Activated naive CD4-positive, alpha-beta T cell treated with anti-CD3 and anti-CD28 coated beads, Interleukin-2, amount 10 ng/mL, durations not matched to agents 7 days and 5 days (primary cell): ENCODE measurements at regions of chr6 and their contacts with region 1.

Region 1: DNA sequence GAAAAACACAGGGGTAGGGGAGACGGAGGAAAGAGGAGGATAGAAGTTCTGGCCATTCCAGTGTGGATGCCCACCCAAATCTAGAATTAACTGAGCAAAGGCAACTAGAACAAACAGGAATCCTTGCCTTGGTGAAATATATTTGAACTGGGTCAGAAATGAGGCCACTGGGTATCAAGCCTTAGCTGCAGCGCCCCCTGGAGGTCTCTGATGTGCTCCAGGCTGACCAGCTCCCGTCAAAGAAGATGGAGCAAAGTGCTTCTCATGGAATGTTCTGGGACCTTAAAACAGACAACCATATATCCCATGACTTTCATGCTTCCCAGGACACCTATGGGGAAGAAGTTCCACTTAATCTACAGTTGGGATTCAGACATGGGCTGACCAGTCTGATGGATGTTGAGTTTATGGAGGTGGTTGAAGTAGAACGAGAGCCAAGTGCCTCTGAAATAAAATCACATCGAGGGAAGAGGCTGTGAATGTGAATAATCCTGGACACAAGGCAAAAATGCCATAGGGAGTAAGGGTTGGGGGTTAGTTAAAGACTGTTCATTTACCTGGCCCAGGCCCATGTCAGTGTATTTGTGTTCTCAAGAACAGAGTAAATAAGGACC is 50.4 kb downstream of the HLA-DPB1 start:
- DNase-seq: peak; percentile 80
- H3K4me3 Mint-ChIP-seq: no peak overlapping the region
- H3K27ac Mint-ChIP-seq: no peak overlapping the region
- H3K4me1 Mint-ChIP-seq: peaks cover 5% of the 10 kb centered on the region
- H3K27me3 Mint-ChIP-seq: peaks cover 50% of the 10 kb centered on the region

Region 2: GRCh38 chr6:32772656-32773055 is 353.6 kb before region 1 on chr6:
- CTCF ChIA-PET with region 1: no interaction called
- DNase-seq: no peak
- H3K4me3 Mint-ChIP-seq: no peak overlapping the region
- H3K27ac Mint-ChIP-seq: no peak overlapping the region
- H3K4me1 Mint-ChIP-seq: peaks cover 2% of the 10 kb centered on the region
- H3K27me3 Mint-ChIP-seq: peaks cover 30% of the 10 kb centered on the region

Region 3: DNA sequence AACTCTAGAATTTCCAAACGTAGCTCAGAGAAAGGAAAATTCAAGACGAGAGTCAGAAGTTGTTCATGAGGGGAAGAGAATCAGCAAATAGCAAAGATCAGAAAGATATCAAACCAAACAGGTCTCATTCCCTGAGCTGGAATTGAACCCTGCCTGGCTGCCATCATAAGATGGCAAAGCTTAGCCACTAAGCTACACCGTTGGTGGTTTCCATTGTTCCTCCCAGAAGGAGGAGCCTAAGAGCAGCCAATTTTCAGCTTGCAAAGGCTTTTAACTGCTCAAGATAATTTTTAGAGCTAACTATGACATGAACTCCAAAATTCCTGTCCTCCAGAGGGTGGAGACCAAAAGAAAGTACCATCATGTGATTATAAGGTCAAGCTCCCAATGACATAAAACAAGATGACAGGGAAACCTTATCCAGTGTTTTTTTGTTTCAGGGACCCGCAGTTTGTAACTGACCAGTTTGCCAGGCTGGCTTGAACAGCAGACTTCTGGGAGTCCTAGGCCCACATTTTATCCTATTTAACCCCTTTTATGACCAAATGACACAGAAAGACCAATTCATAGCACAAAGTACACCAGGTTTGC is 10.2 kb after region 1 on chr6:
- CTCF ChIA-PET with region 1: interaction called, 21 read pairs
- DNase-seq: no peak
- H3K4me3 Mint-ChIP-seq: no peak overlapping the region
- H3K27ac Mint-ChIP-seq: no peak overlapping the region
- H3K4me1 Mint-ChIP-seq: no peaks in the 10 kb centered on the region
- H3K27me3 Mint-ChIP-seq: peaks cover 38% of the 10 kb centered on the region

Region 4: DNA sequence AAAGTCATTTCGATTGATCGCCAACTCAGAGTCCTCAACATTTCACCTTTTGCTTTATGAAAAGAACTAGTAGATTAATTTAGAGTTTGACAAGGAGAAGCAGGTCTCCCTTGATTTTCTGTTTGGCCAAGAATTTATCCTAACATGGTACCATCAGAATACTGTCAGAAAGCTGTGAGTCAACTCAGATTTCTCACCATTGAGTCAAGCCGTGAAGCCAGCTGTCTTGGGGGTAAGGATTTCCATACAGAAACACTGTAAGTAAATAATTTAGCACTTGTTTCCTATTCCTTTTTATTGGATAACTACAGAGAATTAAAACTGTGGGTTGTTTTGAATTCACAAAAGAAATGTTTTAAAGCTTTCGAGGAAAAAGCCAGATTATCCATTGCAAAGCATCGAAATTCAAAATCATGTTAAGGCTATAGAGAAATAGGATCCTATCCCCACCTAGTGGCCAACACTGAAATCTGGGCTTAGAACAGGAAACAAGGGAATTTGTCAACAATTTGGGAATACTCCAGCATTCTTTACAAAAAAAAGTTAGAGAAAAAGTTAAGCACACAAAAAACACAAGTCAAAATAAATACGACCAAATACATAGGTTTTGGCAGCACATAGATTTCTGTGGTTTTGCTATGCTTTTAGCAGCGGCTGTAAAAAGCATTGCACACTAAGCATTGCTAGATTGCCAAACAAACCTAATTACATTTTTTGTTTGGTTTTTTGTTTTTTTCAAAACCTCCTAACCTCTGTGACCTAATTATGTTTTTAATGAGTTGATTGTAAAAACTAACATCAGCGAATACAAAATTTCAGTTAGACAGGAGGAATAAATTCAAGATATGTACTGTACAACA is 21.8 kb after region 1 on chr6:
- CTCF ChIA-PET with region 1: interaction called, 78 read pairs
- DNase-seq: no peak
- H3K4me3 Mint-ChIP-seq: no peak overlapping the region
- H3K27ac Mint-ChIP-seq: no peak overlapping the region
- H3K4me1 Mint-ChIP-seq: no peaks in the 10 kb centered on the region
- H3K27me3 Mint-ChIP-seq: peaks cover 39% of the 10 kb centered on the region

Region 5: GRCh38 chr6:33156561-33156960 is 30.4 kb after region 1 on chr6:
- CTCF ChIA-PET with region 1: interaction called, 40 read pairs
- DNase-seq: no peak
- H3K4me3 Mint-ChIP-seq: no peak overlapping the region
- H3K27ac Mint-ChIP-seq: no peak overlapping the region
- H3K4me1 Mint-ChIP-seq: peaks cover 12% of the 10 kb centered on the region
- H3K27me3 Mint-ChIP-seq: peaks cover 54% of the 10 kb centered on the region

Region 6: DNA sequence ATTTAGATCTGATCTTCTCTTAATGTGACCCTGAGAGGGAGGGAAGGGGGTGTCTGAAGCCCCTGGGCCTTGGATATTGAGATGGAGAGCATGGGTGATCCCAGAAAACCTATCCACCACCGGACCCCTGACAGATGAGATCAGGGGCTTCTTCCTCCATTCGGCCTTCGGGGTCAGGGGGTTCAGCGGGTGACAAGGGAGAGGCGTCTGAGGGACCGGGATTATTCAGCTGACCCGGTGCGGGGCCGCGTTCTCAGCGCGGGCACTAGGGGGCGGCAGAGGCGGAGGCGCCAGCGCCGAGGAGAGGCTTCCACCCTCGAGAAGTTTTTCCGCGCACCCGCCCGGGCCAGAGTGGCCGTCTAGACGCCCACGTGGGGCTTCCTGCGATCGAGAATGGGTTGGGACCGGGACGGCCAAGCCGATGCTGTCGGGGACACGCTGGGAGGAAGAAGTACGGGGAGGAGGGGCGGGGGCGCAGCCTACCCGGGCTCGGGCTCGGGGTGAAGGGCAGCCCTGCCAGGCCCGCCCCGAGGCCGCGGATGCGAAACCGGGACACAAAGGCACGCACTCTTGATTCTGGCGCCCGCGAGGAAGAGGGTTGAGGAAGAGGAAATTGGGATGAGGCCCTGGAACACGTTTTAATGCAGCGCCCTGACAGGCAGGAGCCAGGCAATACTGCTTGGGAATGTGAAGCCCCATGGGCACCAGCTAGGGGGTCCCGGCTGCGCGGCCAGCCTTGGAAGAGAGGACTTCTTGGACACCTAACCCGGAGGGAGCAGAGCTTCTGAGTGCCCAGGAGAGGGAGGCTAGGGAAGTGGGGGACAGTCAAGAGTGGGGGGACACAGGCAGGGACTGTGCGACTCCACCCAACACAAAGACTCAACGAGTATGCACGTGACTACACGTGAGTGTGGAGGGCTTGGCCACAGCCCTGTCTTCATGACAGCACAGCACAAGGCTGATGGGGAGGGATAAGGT is 35.4 kb after region 1 on chr6:
- CTCF ChIA-PET with region 1: interaction called, 40 read pairs
- DNase-seq: peak; percentile 87
- H3K4me3 Mint-ChIP-seq: peak overlapping the region; percentile 77
- H3K27ac Mint-ChIP-seq: peak overlapping the region; percentile 49
- H3K4me1 Mint-ChIP-seq: peaks cover 18% of the 10 kb centered on the region
- H3K27me3 Mint-ChIP-seq: peaks cover 48% of the 10 kb centered on the region

Region 7: GRCh38 chr6:33197431-33198048 is 71.3 kb after region 1 on chr6:
- CTCF ChIA-PET with region 1: interaction called, 27 read pairs
- DNase-seq: peak; percentile 49
- H3K4me3 Mint-ChIP-seq: peak overlapping the region; percentile 98
- H3K27ac Mint-ChIP-seq: peak overlapping the region; percentile 56
- H3K4me1 Mint-ChIP-seq: peaks cover 54% of the 10 kb centered on the region
- H3K27me3 Mint-ChIP-seq: peaks cover 13% of the 10 kb centered on the region

Region 8: GRCh38 chr6:33248925-33249731 is 122.9 kb after region 1 on chr6:
- CTCF ChIA-PET with region 1: interaction called, 86 read pairs
- DNase-seq: peak; percentile 98
- H3K4me3 Mint-ChIP-seq: peak overlapping the region; percentile 85
- H3K27ac Mint-ChIP-seq: peak overlapping the region; percentile 97
- H3K4me1 Mint-ChIP-seq: peaks cover 39% of the 10 kb centered on the region
- H3K27me3 Mint-ChIP-seq: peaks cover 14% of the 10 kb centered on the region